ENCODE measurements at regions of chr16 and their contacts with region 1.

Region 1: DNA sequence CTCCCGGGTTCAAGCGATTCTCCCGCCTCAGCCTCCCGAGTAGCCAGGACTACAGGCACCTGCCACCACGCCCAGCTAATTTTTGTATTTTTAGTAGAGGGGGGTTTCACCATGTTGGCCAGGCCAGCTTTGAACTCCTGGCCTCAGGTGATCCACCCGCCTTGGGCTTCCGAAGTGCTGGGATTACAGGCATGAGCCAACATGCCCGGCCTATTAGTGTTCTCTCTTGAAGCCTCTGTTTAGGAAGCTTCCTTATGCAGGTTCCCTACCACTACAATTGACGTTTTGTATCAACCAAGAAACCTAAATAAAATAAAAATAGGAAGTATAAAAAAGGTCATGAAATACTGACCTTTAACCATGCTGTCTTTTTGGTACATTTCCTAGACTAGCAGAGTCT is 16.0 kb downstream of the CHST5 start:
- DNase-seq: no peak
- CTCF ChIP-seq: no peak

Region 2: DNA sequence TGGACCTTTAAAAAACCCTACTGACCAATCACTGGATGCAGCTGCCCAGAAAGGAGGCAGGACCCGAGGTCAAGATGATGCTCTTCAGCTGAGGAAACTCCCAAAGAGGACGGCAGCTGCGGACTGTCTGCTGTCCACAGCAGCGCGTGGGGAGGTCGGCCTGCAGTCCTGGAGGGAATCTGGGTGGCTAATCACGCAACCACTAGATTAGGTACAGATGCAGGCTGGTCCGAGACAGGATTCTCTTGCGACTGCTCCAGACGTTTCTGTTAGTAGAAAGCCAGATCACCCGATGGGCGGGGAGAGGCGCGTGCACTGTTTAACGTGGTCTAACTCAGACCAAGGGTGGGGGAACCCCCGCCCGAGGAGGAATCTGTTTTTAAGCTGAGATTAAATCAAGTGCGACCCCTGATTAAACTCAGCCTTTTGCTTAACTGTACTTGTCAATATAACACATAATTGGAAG is 321.7 kb before region 1 on chr16:
- CTCF ChIA-PET with region 1: interaction called, 11 read pairs
- POLR2A ChIA-PET with region 1: no interaction called
- DNase-seq: no peak
- CTCF ChIP-seq: no peak

Region 3: GRCh38 chr16:75471723-75472633 is 47.9 kb before region 1 on chr16:
- CTCF ChIA-PET with region 1: interaction called, 44 read pairs
- POLR2A ChIA-PET with region 1: no interaction called
- DNase-seq: peak; percentile 74
- CTCF ChIP-seq: peak; percentile 81

Region 4: GRCh38 chr16:75495076-75495674 is 24.7 kb before region 1 on chr16 and contains the start of gene CHST6:
- CTCF ChIA-PET with region 1: interaction called, 22 read pairs
- POLR2A ChIA-PET with region 1: interaction called, 3 read pairs
- DNase-seq: peak; percentile 86
- CTCF ChIP-seq: no peak

Region 5: DNA sequence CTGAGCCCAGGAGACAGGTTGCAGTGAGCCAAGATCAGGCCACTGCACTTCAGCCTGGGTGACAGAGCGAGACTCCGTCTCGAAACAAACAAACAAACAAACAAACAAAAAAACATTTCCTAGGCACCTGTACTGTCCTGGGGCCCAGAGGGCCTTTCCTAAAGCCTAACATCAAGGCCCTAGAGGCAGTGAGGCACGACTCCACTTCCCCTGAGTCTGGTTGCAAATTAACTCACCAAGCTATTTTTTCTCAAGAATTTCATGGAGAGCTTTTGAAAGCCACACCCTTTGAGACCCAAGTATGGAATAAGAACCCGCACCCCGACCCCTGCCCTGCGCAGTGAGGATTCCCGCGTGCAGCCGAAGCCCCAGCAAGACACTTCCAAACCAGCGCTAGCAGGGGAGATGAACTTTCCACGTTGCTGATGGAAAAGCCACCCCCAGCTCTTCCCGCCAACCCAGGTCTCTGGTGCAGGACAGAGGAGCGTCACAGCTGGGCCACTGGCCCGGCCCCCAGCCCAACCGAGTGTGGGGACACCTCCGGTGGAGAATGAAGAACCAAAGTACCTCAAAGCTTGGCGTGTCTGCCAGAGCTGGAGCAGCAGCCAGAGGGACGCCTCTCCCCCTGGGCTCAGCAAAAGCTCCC is 14.8 kb after region 1 on chr16:
- CTCF ChIA-PET with region 1: interaction called, 28 read pairs
- POLR2A ChIA-PET with region 1: interaction called, 3 read pairs
- DNase-seq: no peak
- CTCF ChIP-seq: no peak

Region 6: GRCh38 chr16:75566040-75566810 is 46.3 kb after region 1 on chr16 and contains the start of gene GABARAPL2:
- CTCF ChIA-PET with region 1: interaction called, 104 read pairs
- POLR2A ChIA-PET with region 1: interaction called, 3 read pairs
- DNase-seq: peak; percentile 91
- CTCF ChIP-seq: no peak

Region 7: GRCh38 chr16:75622761-75623605 is 103.1 kb after region 1 on chr16 and contains the start of gene ADAT1:
- CTCF ChIA-PET with region 1: interaction called, 33 read pairs
- POLR2A ChIA-PET with region 1: interaction called, 4 read pairs
- DNase-seq: peak; percentile 96
- CTCF ChIP-seq: no peak